ENCODE measurements at regions of chr9 and their contacts with region 1.

Region 1: GRCh38 chr9:37592108-37592951 is at the start of gene TOMM5:
- DNase-seq: peak; percentile 94
- ATAC-seq: peak; percentile 94
- H3K4me3 ChIP-seq: peak within 1 kb of the TSS; percentile 82
- H3K27ac ChIP-seq: peak within 1 kb of the TSS; percentile 91
- H3K4me1 ChIP-seq: peaks cover 3% of the 10 kb centered on the region; the same call in 1 of the 2 replicates
- H3K27me3 ChIP-seq: no peaks in the 10 kb centered on the region
- CTCF ChIP-seq: no peak
- POLR2A ChIP-seq: peak; percentile 92
- RAD21 ChIP-seq: no peak
- total RNA-seq, gene TOMM5: 159 and 229 TPM in 2 replicates

Region 2: GRCh38 chr9:37550781-37551180 is 41.5 kb before region 1 on chr9:
- CTCF ChIA-PET with region 1: no interaction called
- POLR2A ChIA-PET with region 1: no interaction called
- dilution Hi-C with region 1: no loop called
- in situ Hi-C with region 1: no loop called
- intact Hi-C with region 1: no loop called
- DNase-seq: peak; percentile 74
- ATAC-seq: peak; percentile 90
- H3K4me3 ChIP-seq: no peak overlapping the region
- H3K27ac ChIP-seq: no peak overlapping the region
- H3K4me1 ChIP-seq: peaks cover 6% of the 10 kb centered on the region
- H3K27me3 ChIP-seq: no peaks in the 10 kb centered on the region
- CTCF ChIP-seq: no peak
- POLR2A ChIP-seq: no peak
- RAD21 ChIP-seq: no peak

Region 3: GRCh38 chr9:37617832-37618231 is 25.5 kb after region 1 on chr9:
- CTCF ChIA-PET with region 1: no interaction called
- POLR2A ChIA-PET with region 1: no interaction called
- dilution Hi-C with region 1: no loop called
- in situ Hi-C with region 1: no loop called
- intact Hi-C with region 1: no loop called
- DNase-seq: peak; percentile 54
- ATAC-seq: peak; percentile 58
- H3K4me3 ChIP-seq: no peak overlapping the region
- H3K27ac ChIP-seq: no peak overlapping the region
- H3K4me1 ChIP-seq: peaks cover 2% of the 10 kb centered on the region; the same call in 1 of the 2 replicates
- H3K27me3 ChIP-seq: no peaks in the 10 kb centered on the region; the same call in none of the 2 replicates
- CTCF ChIP-seq: no peak
- POLR2A ChIP-seq: no peak
- RAD21 ChIP-seq: no peak

Region 4: DNA sequence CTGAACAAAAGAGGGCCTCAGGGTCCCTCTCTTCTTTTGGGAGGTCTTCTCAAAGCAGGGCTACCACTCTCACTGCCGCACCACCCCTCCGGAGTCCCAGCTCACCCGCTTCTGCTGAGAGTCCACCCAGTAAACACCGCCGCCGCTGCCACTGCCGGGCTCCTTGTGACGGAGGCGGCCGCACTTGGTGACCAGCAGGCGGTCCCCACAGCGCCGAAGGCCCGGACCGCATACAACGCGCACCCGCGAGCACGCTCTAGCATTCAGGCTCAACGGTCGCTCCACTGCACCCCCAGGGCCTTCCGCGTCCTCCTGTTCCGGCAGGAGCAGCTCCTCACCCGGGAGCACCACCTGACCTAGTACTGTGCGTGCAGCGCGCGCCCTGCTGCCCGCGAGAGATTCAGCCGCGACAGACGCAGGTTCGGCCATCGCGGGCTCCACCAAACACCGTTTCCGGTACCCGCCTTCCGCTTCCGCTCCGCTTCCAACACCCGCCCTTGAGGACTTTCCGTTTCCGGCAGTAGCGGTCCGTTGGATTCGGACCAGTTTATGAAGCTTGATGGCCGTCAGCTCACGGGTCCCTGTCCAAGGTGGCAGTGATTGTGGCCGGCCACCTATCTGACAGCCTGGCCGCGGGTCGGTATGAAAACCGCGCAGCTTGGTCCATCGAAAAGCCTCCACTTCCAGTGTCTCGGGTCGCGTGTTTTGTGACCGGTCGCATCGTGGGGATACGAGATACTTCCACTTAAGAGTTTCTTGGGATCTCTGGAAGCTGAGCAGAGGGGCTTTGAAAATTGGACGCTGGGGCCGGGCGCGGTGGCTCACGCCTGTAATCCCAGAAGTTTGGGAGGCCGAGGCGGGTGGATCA is 192.5 kb after region 1 on chr9 and contains the start of gene EXOSC3:
- CTCF ChIA-PET with region 1: no interaction called
- POLR2A ChIA-PET with region 1: no interaction called
- dilution Hi-C with region 1: no loop called
- in situ Hi-C with region 1: no loop called
- intact Hi-C with region 1: loop called (anchors 2 kb)
- DNase-seq: peak; percentile 90
- ATAC-seq: peak; percentile 90
- H3K4me3 ChIP-seq: peak within 1 kb of the TSS; percentile 94
- H3K27ac ChIP-seq: peak within 1 kb of the TSS; percentile 95
- H3K4me1 ChIP-seq: peaks cover 3% of the 10 kb centered on the region; the same call in 1 of the 2 replicates
- H3K27me3 ChIP-seq: no peaks in the 10 kb centered on the region
- CTCF ChIP-seq: 0 out of 2 replicates have a peak, but pooled peaks have one; percentile 4
- POLR2A ChIP-seq: peak; percentile 68; the same call in 1 of the 2 replicates
- RAD21 ChIP-seq: peak; percentile 9
- total RNA-seq, gene EXOSC3: 27.1 and 58.6 TPM in 2 replicates

Measured in IMR-90 (cell line).